Left cardiac atrium (tissue), 4 donors: ENCODE measurements at regions of chr17 and their contacts with region 1.

Region 1: DNA sequence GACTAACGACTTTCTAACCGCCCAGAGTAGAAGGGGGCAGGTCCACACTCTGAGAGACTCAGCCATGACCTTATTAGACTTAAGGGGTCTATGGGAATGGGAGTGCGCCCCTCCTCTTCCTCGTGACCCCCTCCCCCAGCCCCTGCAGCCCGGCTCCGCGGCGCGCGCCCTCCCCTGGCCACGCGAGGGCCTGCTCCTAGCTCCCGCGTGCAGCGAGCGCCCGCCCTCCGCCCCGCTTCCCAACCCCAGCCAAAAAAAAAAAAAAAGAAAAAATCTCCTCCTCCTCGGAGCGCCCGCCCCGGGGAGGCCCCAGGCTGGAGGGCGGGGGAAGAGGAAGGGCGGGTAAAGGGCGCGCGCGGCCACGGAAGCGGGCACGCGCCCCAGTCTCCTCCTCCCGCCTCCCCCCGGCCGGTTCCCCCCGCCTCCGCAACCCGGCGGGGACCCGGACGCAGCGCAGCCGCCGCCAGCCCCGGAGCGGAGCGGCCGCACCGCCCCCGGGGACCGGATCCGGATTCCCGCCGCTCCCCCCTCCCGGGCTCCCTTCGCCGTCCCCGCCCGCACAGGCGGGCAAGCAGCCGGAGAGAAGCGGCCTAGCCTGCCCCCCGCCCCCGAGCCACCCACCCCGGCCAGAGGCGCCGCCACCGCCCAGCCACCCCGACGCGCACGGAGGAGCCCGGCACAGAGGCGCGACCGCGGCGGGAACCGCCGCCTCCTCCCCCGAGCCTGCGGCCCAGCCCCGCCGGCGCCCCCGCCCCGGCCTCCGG is 949 bp downstream of the UBTF start:
- DNase-seq: peak; percentile 89
- ATAC-seq: peak; percentile 67 to 71

Region 2: DNA sequence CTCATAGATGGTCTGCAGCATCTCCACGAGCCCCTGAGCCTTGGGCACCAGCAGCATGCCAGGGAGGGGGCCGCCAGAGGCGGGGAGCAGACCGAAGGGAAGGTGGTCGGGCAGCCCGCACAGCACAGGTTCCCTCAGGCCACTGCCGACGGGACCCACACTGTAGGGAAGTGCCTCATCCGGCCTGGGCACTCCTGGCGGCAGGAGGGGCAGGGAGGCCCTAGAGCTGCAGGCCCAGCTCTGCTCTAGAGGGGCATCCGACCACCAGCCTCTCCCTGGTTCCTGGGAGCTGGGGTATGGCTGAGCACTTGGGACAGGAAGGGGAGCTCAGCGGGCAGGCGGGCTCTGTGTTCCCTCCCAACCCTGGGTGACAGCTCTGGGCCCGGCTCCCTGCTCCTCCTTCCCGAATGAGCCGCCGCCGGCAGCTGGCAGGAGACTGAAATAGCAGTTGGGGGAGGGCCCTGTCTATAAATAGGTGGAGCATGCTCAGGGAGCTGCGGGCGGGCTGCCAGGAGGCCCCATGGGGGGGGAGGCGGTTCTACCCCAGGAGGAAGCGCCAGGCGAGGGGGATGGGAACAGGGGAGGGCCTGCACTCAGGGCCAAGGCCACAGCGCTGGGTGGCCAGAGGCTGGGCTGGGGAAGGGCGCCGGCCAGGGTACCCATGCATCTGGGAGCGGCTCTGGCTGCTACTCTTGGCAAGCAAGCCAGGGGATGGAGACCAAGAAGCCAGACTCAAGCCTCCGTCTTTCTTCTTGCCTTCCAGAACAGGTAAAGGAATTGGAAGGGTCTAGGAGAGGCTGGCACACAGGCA is 107.5 kb before region 1 on chr17:
- intact Hi-C with region 1: no loop called
- DNase-seq: peak; percentile 98
- ATAC-seq: peak; percentile 88

Region 3: DNA sequence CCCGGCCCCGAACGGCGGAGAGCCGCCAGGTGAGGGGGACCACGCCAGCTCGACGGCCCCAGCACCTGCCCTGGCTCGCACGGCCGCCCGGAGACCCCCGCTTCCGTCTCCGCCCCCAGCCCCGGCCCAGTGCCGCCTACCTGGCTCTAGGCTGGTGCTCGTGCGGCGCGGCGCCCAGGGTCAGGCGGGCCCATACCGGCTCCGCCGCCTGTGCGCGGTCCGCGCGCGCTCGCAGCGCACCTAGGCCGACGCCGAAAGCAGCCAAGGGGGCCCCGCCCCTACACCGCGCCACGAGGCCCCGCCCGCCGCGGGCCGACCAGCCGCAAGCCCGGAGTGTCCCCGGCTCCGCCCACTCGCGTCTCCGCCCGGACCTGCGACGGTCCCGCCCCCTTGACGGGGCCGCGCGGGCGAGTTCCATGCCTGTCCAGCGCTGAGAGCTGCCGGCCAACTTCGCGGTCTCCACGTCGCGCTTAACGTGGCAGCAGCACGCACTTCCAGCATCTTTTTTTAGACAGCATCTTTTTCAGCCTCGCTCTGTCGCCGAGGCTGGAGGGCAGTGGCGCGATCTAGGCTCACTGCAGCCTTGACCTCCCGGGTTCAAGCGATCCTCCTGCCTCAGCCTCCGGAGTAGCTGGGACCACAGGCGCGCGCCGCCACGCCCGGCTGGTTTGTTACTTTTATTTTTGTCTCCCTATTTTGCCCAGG is 106.2 kb after region 1 on chr17 and contains the start of gene SLC25A39:
- intact Hi-C with region 1: loop called (anchors 1 to 5 kb)
- DNase-seq: peak; percentile 96
- ATAC-seq: peak; percentile 91 to 92
- total RNA-seq, gene SLC25A39: 60.9 to 62.5 TPM

Region 4: GRCh38 chr17:44331249-44331760 is 112.8 kb after region 1 on chr17:
- intact Hi-C with region 1: loop called (anchors 2 to 5 kb)
- DNase-seq: no peak
- ATAC-seq: peak; percentile 2 to 11